ENCODE measurements at regions of chr1 and their contacts with region 1.

Region 1: DNA sequence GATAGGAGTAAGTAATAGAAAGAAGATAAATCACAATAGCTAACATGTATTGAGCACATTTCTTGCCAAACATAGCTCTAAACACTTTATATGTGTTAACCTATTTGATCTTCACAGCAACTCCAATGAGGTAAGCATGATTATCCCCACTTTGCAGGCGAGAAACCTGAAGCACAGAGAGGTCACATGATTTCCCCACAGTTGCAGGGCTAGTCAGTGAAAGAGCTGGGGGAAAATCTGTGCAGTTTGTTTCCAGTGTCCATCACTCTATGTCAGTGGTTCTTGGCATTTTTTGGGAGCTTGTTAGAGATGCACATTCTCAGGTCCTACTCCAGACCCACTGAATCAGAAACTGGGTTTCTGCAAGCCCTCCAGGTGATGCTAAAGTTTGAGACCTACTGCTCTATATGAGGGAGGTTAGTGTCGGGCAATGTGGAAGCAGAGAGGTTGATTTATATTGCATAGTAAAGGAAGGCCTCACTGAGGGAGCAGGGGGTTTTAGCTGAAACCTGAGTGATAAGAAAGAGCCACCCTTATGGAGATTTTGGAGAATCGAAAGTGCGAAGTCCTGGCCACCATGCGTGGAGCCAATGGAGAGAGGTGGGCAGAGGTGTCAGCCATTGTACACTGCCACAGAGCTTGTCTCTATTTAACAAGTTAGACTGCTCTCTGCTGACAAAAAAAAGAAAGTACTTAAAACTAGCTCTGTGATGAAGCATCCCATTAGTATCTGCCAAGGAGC is 20.9 kb downstream of the MCOLN3 start:
- DNase-seq: peak; percentile 74
- H3K4me3 Mint-ChIP-seq: no peak overlapping the region
- H3K27ac Mint-ChIP-seq: peak overlapping the region; percentile 72
- H3K4me1 Mint-ChIP-seq: peaks cover 8% of the 10 kb centered on the region
- H3K27me3 Mint-ChIP-seq: peaks cover 5% of the 10 kb centered on the region

Region 2: GRCh38 chr1:84781946-84782771 is 245.3 kb before region 1 on chr1:
- intact Hi-C with region 1: loop called (anchors 10 kb)
- DNase-seq: peak; percentile 93
- H3K4me3 Mint-ChIP-seq: peak overlapping the region; percentile 75
- H3K27ac Mint-ChIP-seq: no peak overlapping the region
- H3K4me1 Mint-ChIP-seq: peaks cover 22% of the 10 kb centered on the region
- H3K27me3 Mint-ChIP-seq: peaks cover 8% of the 10 kb centered on the region

Region 3: DNA sequence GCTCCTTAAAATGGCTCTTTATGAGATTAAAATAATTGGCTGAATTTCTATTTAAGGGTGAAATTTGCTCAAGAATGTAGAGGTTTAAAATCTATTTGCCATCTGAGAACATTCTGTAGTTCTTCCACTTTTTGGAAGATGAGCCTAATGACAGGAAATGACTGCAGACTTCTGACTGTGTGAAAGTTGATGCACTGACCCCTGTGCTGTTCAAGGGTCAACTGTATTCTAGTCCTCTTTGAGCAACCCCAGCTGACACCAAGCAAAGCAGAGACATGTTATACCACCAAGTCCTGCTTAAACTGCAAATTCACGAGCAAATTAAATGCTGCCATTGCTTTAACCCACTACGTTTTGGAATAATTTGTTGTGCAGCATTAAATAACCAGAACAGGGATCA is 410.9 kb after region 1 on chr1:
- intact Hi-C with region 1: no loop called
- DNase-seq: no peak
- H3K4me3 Mint-ChIP-seq: no peak overlapping the region
- H3K27ac Mint-ChIP-seq: no peak overlapping the region
- H3K4me1 Mint-ChIP-seq: no peaks in the 10 kb centered on the region
- H3K27me3 Mint-ChIP-seq: peaks cover 2% of the 10 kb centered on the region

Measured in activated CD4-positive, alpha-beta T cell treated with anti-CD3 and anti-CD28 coated beads, Interleukin-2, amount 10 ng/mL, durations not matched to agents 24 days and 14 days (primary cell).